ENCODE measurements at regions of chrX and their contacts with region 1.

Region 1: DNA sequence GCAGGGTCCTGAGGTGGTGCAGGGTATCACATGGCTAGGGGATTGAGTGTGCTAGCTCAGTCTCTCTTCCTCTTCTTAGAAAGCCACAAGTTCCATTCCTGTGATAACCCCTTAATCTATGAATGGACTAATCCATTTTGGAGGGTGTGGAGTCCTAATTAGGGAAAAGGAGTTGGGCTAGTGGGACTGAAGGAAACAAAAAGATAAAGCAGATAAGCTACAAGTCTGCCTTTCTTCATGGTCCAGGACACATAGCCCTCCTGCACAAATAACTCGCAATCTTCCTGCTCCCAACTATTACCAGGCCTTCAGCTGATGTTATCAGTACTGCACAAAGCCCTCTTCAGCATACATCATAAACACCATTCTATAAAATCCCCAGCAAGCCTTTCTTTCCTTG is 44.2 kb downstream of the ZNF81 start:
- DNase-seq: no peak
- ATAC-seq: no peak

Region 2: GRCh38 chrX:47706575-47706974 is 174.4 kb before region 1 on chrX:
- intact Hi-C with region 1: no loop called
- DNase-seq: no peak
- ATAC-seq: no peak

Region 3: DNA sequence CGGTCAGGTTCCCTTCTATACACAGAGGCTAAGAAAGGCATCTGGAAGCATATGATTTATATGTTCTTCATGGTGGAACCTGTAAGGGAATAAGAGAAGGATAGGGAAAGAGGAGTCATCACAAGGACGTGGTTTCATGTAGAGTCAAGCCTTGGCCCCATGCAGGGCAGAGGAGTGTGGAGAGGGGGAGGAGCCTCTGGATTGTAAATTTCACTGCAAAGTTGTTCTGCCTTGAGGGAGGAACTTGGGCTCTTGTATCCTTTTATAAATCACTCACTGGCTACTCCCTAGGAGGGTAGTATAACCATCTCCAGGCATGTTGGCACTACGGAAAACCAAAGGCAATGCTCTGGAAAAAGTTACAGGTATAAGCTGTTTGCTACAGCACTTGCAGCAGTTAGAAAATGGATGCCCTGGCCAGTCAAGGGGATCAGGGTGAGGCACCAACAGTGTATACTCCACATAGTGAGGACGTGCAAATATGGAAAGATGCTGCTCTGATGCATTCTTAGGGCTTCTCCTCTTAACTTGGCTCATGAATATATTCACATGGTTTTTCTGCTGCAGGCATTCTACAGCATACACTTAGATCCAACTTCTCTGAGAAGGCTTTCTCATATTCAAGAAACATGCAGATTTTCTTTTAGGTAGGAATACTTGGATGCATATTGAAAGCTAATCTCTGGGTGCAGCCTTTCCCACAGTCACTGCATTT is 104.5 kb before region 1 on chrX:
- intact Hi-C with region 1: no loop called
- DNase-seq: no peak
- ATAC-seq: no peak

Region 4: GRCh38 chrX:47854474-47854873 is 26.5 kb before region 1 on chrX:
- intact Hi-C with region 1: no loop called
- DNase-seq: peak; percentile 57
- ATAC-seq: peak; percentile 60

Region 5: GRCh38 chrX:47927212-47927611 is 46.3 kb after region 1 on chrX:
- intact Hi-C with region 1: no loop called
- DNase-seq: no peak
- ATAC-seq: no peak

Region 6: DNA sequence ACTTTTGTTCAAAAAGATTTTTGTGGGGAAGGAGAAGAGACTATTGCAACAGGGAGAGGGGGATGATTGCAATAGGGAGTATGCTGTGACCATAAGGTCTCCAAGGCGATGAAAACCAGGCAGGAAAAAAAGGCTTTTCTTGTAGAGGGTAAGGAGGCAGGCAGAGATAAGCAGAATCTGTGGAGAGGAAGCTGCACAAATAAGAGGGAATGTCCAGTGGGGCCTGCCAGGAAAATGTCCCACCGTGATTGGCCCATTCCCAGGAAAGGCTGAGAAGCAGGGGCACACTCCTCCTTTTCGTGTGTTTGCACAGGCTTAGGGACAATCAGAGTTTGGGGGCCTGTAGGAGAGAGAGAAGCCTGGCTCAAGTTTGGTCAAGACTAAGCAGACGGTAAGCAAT is 155.0 kb after region 1 on chrX:
- intact Hi-C with region 1: loop called (anchors 10 kb)
- DNase-seq: no peak
- ATAC-seq: no peak